ENCODE measurements at regions of chr19 and their contacts with region 1.

Region 1: DNA sequence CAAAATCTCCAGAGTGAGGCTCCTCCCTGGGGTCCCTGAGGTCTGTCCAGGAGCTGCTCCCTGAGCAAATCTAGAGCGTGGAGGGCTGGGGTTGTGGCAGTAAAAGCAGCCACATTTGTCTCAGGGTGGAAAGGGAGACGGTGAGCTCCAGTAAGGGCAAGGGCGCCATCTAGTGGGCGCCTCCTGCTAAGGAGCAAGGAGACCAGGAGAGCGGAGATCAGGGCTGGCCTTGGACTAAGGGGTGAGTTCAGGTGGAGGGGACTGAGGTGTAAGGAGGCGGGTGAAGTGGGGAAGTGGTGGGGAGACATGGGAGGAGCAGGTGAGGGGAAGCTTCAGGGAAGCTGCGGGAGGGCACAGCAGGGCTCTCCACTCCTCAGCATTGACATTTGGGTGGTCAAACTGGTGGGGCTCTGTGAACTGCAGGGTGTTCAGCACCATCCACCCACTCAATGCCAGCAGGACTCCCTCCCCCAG is 5.3 kb upstream of the CEACAM21 start:
- DNase-seq: peak; percentile 62 to 94 (median 82)
- ATAC-seq: peak; percentile 90 to 96 (median 94)
- H3K4me3 ChIP-seq: no peak overlapping the region
- H3K4me3 Mint-ChIP-seq: peak overlapping the region in 1 of 3 donors; percentile 16
- H3K27ac ChIP-seq: no peak overlapping the region
- H3K27ac Mint-ChIP-seq: peak overlapping the region; percentile 61 to 75
- H3K4me1 ChIP-seq: peaks cover 2 to 23% of the 10 kb centered on the region in 2 experiments
- H3K4me1 Mint-ChIP-seq: peaks cover 47 to 55% (median 51%) of the 10 kb centered on the region in 3 donors
- H3K27me3 ChIP-seq: no peaks in the 10 kb centered on the region
- H3K27me3 Mint-ChIP-seq: no peaks in the 10 kb centered on the region

Region 2: DNA sequence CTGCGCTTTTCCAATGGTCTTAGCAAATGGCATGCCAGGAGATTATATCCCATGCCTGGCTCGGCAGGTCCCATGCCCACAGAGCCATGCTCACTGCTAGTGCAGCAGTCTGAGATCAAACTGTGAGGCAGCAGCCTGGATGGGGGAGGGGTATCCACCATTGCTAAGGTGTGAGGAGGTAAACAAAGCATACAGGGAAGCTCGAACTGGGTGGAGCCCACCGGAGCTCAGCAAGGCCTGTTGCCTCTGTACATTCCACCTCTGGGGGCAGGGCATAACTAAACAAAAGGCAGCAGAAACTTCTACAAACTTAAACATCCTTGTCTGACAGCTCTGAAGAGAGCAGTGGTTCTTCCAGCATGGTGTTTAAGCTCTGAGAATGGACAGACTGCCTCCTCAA is 471.9 kb before region 1 on chr19:
- CTCF ChIA-PET with region 1: no interaction called
- POLR2A ChIA-PET with region 1: no interaction called
- DNase-seq: no peak
- ATAC-seq: no peak
- H3K4me3 ChIP-seq: no peak overlapping the region
- H3K4me3 Mint-ChIP-seq: no peak overlapping the region
- H3K27ac ChIP-seq: no peak overlapping the region
- H3K27ac Mint-ChIP-seq: no peak overlapping the region
- H3K4me1 ChIP-seq: no peaks in the 10 kb centered on the region
- H3K4me1 Mint-ChIP-seq: peaks cover 1 to 8% (median 2%) of the 10 kb centered on the region in 3 donors
- H3K27me3 ChIP-seq: peaks cover 0 to 18% of the 10 kb centered on the region in 2 experiments
- H3K27me3 Mint-ChIP-seq: peaks cover 24 to 36% of the 10 kb centered on the region in 2 donors

Region 3: GRCh38 chr19:41449079-41449864 is 121.4 kb before region 1 on chr19:
- CTCF ChIA-PET with region 1: interaction called, 9 to 10 read pairs
- POLR2A ChIA-PET with region 1: no interaction called
- DNase-seq: peak in 34 of 35 experiments; percentile 25 to 82 (median 56)
- ATAC-seq: peak; percentile 86 to 90 (median 88)
- H3K4me3 ChIP-seq: no peak overlapping the region
- H3K4me3 Mint-ChIP-seq: peak overlapping the region; percentile 68 to 70 (median 68)
- H3K27ac ChIP-seq: no peak overlapping the region
- H3K27ac Mint-ChIP-seq: no peak overlapping the region
- H3K4me1 ChIP-seq: peaks cover 0 to 14% of the 10 kb centered on the region in 2 experiments
- H3K4me1 Mint-ChIP-seq: peaks cover 5 to 20% (median 13%) of the 10 kb centered on the region in 3 donors
- H3K27me3 ChIP-seq: peaks cover 0 to 29% of the 10 kb centered on the region in 2 experiments
- H3K27me3 Mint-ChIP-seq: peaks cover 0 to 20% of the 10 kb centered on the region in 2 donors

Region 4: GRCh38 chr19:41479757-41480191 is 90.9 kb before region 1 on chr19:
- CTCF ChIA-PET with region 1: no interaction called
- POLR2A ChIA-PET with region 1: no interaction called
- DNase-seq: no peak
- ATAC-seq: no peak
- H3K4me3 ChIP-seq: no peak overlapping the region
- H3K4me3 Mint-ChIP-seq: no peak overlapping the region
- H3K27ac ChIP-seq: no peak overlapping the region
- H3K27ac Mint-ChIP-seq: no peak overlapping the region
- H3K4me1 ChIP-seq: no peaks in the 10 kb centered on the region
- H3K4me1 Mint-ChIP-seq: no peaks in the 10 kb centered on the region
- H3K27me3 ChIP-seq: peaks cover 4 to 39% of the 10 kb centered on the region in 2 experiments
- H3K27me3 Mint-ChIP-seq: peaks cover 45 to 52% of the 10 kb centered on the region in 2 donors

Region 5: DNA sequence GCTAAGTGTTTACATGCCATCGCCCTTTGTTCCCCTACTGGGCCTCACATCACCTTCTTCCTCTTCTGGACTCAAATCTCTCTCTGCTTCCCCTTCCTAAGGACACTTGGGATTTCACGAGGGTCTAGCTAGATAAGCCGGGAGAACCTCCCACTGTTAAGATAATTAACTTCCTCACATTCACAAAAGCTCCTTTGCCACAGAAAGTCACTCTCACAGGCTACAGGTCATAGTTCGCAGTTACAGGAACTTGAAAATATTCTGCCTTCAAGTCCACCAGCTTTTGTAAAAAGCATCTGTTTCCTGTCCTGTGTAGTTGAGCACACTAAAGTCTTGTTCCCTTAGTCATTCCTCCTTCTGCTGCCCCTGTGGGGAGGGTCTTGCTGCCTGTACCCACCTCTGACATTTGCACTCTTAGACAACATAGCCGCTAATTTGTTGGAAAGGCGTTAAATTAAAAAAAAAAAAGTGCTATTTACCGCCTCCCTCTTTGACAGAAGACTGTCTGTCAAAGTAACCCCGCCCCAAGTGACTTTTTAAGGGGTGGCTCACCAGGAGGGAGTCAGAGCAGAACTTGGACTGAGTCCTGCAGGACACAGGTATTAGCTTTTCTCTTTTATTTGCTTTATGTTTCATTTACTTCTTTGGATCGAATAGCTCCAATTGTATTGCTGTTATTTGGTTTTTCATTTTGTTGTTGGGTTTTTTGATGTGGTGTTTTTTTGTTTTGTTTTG is 21.6 kb before region 1 on chr19:
- CTCF ChIA-PET with region 1: interaction called in 1 of 2 experiments, 42 read pairs
- POLR2A ChIA-PET with region 1: no interaction called
- DNase-seq: peak in 34 of 35 experiments; percentile 38 to 84 (median 68)
- ATAC-seq: peak; percentile 61 to 76 (median 65)
- H3K4me3 ChIP-seq: peak overlapping the region; percentile 78 to 98
- H3K4me3 Mint-ChIP-seq: peak overlapping the region; percentile 88 to 100 (median 98)
- H3K27ac ChIP-seq: peak overlapping the region; percentile 84
- H3K27ac Mint-ChIP-seq: peak overlapping the region; percentile 97 to 99
- H3K4me1 ChIP-seq: peaks cover 41 to 54% of the 10 kb centered on the region in 2 experiments
- H3K4me1 Mint-ChIP-seq: peaks cover 68 to 82% (median 74%) of the 10 kb centered on the region in 3 donors
- H3K27me3 ChIP-seq: no peaks in the 10 kb centered on the region
- H3K27me3 Mint-ChIP-seq: no peaks in the 10 kb centered on the region

Region 6: DNA sequence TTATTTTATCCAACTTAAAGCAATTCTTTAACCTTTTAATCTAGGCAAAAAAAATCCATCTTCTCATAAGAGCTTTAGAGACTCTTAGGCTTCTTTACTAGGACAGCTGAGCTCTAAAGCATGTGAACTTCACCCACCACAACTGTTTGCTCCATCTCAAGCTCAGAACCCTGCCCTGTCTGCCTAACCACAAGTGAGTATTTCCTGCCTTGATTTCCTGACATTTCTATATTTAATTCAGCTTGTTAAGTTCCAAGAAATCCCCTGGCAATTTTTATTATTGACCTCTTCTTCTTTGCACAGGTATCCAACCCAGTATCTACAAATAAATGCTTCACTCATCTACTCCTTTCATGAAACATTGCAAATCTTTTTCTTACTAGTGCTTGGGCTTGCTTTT is 15.8 kb before region 1 on chr19:
- CTCF ChIA-PET with region 1: interaction called, 6 to 42 read pairs
- POLR2A ChIA-PET with region 1: interaction called in 1 of 2 experiments, 4 read pairs
- DNase-seq: peak in 11 of 35 experiments; percentile 29 to 79 (median 46)
- ATAC-seq: peak; percentile 78 to 87 (median 84)
- H3K4me3 ChIP-seq: no peak overlapping the region
- H3K4me3 Mint-ChIP-seq: peak overlapping the region; percentile 55 to 98 (median 88)
- H3K27ac ChIP-seq: peak overlapping the region; percentile 70
- H3K27ac Mint-ChIP-seq: peak overlapping the region; percentile 97 to 99
- H3K4me1 ChIP-seq: peaks cover 37 to 55% of the 10 kb centered on the region in 2 experiments
- H3K4me1 Mint-ChIP-seq: peaks cover 74 to 87% (median 80%) of the 10 kb centered on the region in 3 donors
- H3K27me3 ChIP-seq: no peaks in the 10 kb centered on the region
- H3K27me3 Mint-ChIP-seq: no peaks in the 10 kb centered on the region

Measured in T-cell (primary cell).